K562 (cell line): ENCODE measurements at regions of chr1 and their contacts with region 1.

Region 1: DNA sequence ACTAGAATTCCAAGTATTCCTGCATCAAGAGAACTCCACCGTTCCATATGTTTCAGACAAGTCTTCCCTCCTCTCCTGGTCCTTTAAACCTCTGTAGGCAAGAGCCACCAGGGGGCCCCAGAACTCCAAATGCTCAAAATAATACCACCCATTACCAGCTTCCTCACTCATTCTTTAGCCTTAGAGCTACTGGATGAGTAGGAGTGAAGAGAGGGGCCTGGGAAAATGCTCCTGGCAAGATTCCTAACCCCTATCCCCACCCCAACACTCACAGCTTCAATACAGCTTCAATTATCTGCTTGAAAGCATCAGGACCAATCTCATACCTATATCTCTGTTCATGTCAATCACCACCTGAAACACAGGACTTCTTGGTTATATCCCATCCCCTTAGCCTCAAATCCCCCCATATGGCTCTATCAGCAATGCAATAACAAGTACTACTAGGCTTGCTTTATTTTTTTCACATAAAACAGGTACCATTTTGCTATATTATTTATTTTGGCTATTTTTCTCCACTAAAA is 9.7 kb downstream of the TOR1AIP2 start:
- DNase-seq: peak; percentile 56 to 71 (median 64)
- ATAC-seq: peak; percentile 90
- H3K4me3 ChIP-seq: no peak overlapping the region
- H3K27ac ChIP-seq: no peak overlapping the region
- H3K4me1 ChIP-seq: no peaks in the 10 kb centered on the region; a peak in 1 of 5 replicates
- H3K27me3 ChIP-seq: no peaks in the 10 kb centered on the region
- CTCF ChIP-seq: peak; percentile 72 to 85 (median 79)
- EP300 ChIP-seq: no peak
- POLR2A ChIP-seq: no peak
- RAD21 ChIP-seq: peak; percentile 69 to 79

Region 2: GRCh38 chr1:180168786-180169639 is 301.1 kb after region 1 on chr1:
- CTCF ChIA-PET with region 1: interaction called, 3 read pairs
- POLR2A ChIA-PET with region 1: interaction called, 3 read pairs
- in situ Hi-C with region 1: loop called (anchors 5 kb)
- intact Hi-C with region 1: loop called (anchors 2 kb)
- DNase-seq: peak; percentile 70 to 78 (median 75)
- ATAC-seq: peak; percentile 93
- H3K4me3 ChIP-seq: no peak overlapping the region
- H3K27ac ChIP-seq: no peak overlapping the region
- H3K4me1 ChIP-seq: peaks cover 10 to 19% of the 10 kb centered on the region in 2 experiments; a peak in 4 of 5 replicates
- H3K27me3 ChIP-seq: no peaks in the 10 kb centered on the region
- CTCF ChIP-seq: peak; percentile 75 to 89 (median 83)
- EP300 ChIP-seq: no peak
- POLR2A ChIP-seq: no peak
- RAD21 ChIP-seq: peak; percentile 42 to 74

Region 3: DNA sequence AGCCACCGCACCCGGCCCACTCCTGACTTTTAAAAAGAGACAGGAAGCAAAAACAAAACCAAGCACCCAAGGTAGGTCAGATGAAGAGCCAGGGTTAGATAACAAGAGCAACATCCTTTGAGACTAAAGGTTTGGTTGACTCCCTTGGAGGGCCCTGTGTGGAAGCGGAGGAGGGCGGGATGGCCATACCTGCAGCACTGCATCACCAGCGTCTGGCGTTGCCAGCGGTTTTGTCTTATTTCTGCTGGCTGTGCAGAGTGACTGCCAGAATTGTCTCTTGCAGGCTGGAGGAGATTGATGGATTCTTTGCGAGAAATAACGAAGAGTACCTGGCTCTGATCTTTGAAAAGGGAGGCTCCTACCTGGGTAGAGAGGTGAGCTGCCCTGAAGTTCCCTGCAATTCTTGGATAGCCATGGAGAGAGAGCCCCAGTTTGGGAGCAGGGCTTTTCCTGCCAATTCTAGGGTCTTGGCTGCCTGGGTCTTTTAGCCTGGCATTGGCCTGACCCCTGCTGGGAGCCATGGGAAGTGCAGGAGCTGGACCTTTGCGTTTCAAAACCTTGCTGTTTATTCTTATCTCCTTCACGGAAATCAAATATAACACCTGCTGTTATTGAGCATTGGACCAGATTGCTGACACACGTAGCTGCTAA is 310.8 kb after region 1 on chr1:
- CTCF ChIA-PET with region 1: interaction called, 24 read pairs
- POLR2A ChIA-PET with region 1: no interaction called
- in situ Hi-C with region 1: loop called (anchors 5 kb)
- intact Hi-C with region 1: loop called (anchors 1 kb)
- DNase-seq: peak; percentile 78 to 82 (median 80)
- ATAC-seq: peak; percentile 68
- H3K4me3 ChIP-seq: no peak overlapping the region
- H3K27ac ChIP-seq: no peak overlapping the region
- H3K4me1 ChIP-seq: no peaks in the 10 kb centered on the region
- H3K27me3 ChIP-seq: no peaks in the 10 kb centered on the region
- CTCF ChIP-seq: peak; percentile 91 to 99 (median 98)
- EP300 ChIP-seq: 0 out of 2 replicates have a peak, but pooled peaks have one; percentile 16
- POLR2A ChIP-seq: no peak
- RAD21 ChIP-seq: peak; percentile 93 to 97